Activated CD8-positive, alpha-beta T cell treated with anti-CD3 and anti-CD28 coated beads for 36 hours (primary cell): ENCODE measurements at regions of chr9 and their contacts with region 1.

Region 1: DNA sequence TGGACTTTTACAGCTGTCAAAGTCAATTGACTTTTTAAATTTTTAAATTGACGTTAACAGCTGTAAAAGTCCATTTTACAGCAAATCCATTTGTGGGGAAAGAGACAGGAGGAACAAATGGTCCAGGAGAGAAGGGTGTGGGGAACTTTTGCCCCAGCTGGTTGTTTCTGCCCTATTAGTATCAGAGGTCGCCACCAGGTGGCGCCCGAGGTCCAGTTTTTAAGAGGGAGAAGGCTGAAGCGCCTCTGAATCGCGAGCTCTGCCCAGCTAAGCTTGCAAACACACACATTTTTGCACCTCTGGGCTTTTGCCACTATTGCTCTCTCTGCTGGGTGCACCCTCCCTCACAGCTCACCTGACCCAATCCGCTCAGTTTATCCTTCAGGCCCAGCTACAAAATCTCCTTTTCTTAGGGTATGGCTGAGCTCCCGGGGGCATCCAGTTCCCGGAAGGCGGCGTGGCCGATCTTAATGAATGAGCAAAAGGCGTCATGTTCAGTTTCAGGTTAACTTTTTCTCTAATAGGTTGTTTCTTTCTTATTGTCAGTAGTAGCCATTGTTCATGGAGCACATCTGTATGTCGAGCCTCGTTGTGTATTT is 6.3 kb upstream of the TTLL11 start:
- DNase-seq: peak; percentile 90
- ATAC-seq: peak; percentile 87
- H3K4me3 Mint-ChIP-seq: peak overlapping the region; percentile 1
- H3K27ac Mint-ChIP-seq: no peak overlapping the region
- H3K4me1 Mint-ChIP-seq: peaks cover 9% of the 10 kb centered on the region
- H3K27me3 Mint-ChIP-seq: peaks cover 8% of the 10 kb centered on the region
- CTCF ChIP-seq: peak; percentile 84

Region 2: DNA sequence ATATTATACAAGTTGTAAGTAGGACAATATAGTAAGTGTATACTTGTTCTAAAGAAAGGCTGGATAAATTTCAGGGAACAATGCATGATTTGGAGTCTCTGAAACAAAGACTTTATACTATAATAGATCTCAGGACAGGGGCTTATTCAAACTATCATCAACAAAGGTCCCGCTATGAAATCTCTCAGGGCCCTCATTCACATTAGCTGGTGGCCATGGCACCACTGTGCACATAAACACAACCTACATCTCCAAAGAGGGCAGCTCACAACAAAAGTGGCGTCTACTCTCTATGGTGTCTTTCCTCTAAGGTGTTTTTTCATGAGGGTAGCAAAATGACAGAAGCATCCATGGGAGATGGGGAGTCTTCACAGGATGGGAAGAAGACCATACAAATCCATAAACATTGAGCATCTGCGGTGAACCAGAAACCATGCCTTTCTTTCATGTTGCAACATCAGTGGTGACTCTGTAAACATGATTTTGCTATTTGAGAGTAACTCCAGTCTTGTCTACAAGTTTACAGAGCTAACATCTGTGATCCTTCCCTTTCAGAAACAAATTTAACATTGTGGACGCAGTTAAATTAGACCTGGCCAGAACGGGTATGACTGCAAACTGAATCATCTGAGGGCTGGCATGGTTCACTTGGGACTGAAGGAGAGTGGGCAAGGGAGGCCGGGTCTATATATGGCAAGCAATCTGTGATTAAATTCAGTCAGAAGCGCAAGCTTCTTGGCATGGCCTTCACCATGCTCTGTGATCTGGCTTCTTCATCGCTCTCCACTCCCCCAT is 11.8 kb before region 1 on chr9:
- CTCF ChIA-PET with region 1: interaction called, 26 read pairs
- POLR2A ChIA-PET with region 1: no interaction called
- intact Hi-C with region 1: no loop called
- DNase-seq: no peak
- ATAC-seq: no peak
- H3K4me3 Mint-ChIP-seq: no peak overlapping the region
- H3K27ac Mint-ChIP-seq: no peak overlapping the region
- H3K4me1 Mint-ChIP-seq: peaks cover 20% of the 10 kb centered on the region
- H3K27me3 Mint-ChIP-seq: no peaks in the 10 kb centered on the region
- CTCF ChIP-seq: no peak

Region 3: GRCh38 chr9:122125158-122125508 is 25.8 kb after region 1 on chr9:
- CTCF ChIA-PET with region 1: interaction called, 304 read pairs
- POLR2A ChIA-PET with region 1: no interaction called
- intact Hi-C with region 1: no loop called
- DNase-seq: peak; percentile 84
- ATAC-seq: peak; percentile 80
- H3K4me3 Mint-ChIP-seq: no peak overlapping the region
- H3K27ac Mint-ChIP-seq: no peak overlapping the region
- H3K4me1 Mint-ChIP-seq: peaks cover 16% of the 10 kb centered on the region
- H3K27me3 Mint-ChIP-seq: peaks cover 39% of the 10 kb centered on the region
- CTCF ChIP-seq: peak; percentile 92

Region 4: DNA sequence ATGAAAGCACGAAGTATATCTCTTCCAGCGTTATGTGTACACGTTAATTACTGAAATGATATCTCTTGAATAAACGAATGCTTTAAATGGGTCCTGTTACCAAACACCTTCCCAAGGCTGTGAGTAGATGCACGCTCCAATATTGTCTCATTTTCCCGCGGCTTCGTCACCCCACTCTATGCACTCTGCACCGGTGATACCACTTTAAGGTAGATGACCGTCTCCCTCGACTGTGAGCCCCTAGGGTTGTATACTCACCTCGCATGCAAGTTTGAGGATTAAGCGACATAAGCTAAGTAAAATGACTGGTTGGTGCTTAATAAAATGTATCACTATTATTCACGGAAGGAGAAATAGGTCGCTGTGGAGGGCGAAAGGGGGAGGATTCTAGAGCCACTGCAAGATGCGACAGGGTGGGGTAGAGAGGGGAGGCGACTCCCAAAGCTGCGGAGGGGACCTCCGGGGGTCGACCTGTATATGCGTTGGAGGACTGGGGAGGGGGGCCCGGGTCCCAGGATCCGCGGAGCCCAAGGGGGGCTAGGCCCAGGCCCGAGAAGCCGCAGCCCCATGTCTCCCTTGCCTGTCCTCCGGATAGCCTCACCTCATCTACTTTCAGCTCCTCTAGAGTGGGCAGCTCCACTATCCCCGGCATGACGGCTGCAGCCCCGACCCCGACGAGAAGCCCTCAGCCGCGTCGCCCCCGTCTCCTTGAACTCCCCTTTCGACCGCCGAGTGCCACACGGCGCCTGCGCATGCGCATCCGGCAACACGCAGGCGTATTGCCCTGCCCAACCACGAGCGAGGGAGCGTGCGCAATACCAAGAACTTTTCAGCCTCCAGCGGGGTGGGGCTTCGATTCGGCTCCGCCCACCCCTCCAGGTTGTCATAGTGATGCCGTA is 59.9 kb after region 1 on chr9 and contains the starts of genes MORN5 and NDUFA8:
- CTCF ChIA-PET with region 1: interaction called, 15 read pairs
- POLR2A ChIA-PET with region 1: no interaction called
- intact Hi-C with region 1: no loop called
- DNase-seq: peak; percentile 97
- ATAC-seq: peak; percentile 97
- H3K4me3 Mint-ChIP-seq: peak within 1 kb of the TSS; percentile 97
- H3K27ac Mint-ChIP-seq: peak within 1 kb of the TSS; percentile 96
- H3K4me1 Mint-ChIP-seq: peaks cover 30% of the 10 kb centered on the region
- H3K27me3 Mint-ChIP-seq: peaks cover 2% of the 10 kb centered on the region
- CTCF ChIP-seq: no peak
- total RNA-seq, gene MORN5: not detected
- total RNA-seq, gene NDUFA8: 48.3 to 52.5 TPM

Region 5: DNA sequence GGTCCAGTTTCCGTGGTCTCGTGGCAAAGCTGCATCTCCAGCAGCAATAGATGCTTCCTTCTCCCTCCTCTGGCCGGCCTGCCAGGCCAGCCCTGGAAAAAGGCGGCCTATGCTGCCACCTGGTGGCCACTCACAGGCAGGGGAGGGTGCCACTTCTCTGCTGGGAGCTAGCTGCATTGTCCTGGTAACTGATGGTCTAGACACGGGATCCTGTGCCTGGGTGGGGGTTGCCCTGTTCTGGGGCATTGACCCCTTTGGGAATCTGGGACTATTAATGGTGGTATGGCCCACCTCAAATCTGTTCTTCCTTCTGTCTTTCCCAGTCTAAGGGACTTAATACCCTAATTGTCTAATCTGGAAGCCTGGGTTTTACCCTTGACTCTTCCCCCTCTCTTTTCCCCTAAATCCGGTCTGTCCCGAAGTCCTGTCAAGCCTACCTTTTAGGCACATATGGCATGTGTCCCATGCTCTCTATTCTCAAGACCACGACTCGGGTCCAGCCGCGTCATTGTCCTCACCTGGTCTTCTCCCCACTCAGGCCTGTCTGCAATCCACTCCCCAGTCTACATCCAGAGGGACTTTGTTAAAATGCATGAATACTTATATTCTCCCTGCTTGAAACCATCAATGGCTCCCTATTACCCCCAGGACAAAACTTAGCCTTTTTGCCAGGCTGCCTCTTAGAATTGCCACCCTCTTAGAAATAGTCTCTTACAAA is 251.4 kb after region 1 on chr9:
- CTCF ChIA-PET with region 1: interaction called, 70 read pairs
- POLR2A ChIA-PET with region 1: no interaction called
- intact Hi-C with region 1: loop called (anchors 2 kb)
- DNase-seq: peak; percentile 82
- ATAC-seq: peak; percentile 89
- H3K4me3 Mint-ChIP-seq: no peak overlapping the region
- H3K27ac Mint-ChIP-seq: no peak overlapping the region
- H3K4me1 Mint-ChIP-seq: peaks cover 15% of the 10 kb centered on the region
- H3K27me3 Mint-ChIP-seq: peaks cover 13% of the 10 kb centered on the region
- CTCF ChIP-seq: peak; percentile 92